ENCODE measurements at regions of chr4 and their contacts with region 1.

Region 1: DNA sequence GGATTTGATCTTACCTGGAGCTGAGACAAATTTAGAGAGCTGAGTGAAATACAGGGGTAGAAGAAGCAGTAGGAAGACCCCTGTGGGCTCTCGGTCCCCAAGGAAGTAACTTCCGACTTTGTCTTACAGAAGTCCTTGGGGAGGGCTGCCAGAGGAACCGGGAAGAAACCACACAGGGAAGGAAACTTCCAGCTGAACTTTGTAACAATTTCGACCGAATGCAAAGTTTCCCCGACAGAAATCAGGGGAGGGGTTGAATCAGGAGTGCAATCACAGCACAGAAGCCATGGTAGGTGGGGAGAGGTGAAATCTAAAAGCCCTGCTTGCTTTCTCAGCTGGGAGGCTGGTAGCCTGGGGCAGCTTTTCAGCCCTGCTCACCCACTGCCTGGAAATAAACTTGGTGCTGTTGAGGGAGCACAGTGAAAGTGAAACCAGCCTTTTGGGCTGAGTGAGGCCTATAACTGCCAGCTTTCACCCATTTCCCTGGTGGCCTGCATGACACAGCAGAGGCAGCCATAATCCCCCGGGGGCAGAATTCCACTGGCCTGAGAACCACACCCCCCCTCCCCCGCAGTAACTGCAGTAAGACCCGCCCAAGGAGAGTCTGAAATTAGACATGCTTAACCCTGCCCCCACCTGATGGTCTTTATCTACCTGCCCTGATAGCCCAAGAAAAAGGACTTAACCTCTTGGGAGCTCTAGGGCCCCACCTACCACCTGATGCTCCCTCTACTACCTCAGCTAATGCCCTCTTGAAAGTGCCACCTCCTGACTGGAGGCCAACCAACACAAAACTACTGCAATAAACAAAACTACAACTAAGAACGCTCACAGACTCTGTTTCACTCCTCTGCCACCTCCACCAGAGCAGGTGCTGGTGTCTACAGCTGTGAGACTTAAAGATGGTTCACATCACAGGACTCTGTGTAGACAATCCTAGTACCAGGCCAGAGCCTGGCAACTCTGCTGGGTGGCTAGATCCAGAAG is 248.2 kb downstream of the PARM1 start:
- DNase-seq: no peak
- H3K4me3 ChIP-seq: no peak overlapping the region
- H3K27ac ChIP-seq: no peak overlapping the region
- H3K4me1 ChIP-seq: no peaks in the 10 kb centered on the region
- H3K27me3 ChIP-seq: no peaks in the 10 kb centered on the region
- CTCF ChIP-seq: no peak

Region 2: DNA sequence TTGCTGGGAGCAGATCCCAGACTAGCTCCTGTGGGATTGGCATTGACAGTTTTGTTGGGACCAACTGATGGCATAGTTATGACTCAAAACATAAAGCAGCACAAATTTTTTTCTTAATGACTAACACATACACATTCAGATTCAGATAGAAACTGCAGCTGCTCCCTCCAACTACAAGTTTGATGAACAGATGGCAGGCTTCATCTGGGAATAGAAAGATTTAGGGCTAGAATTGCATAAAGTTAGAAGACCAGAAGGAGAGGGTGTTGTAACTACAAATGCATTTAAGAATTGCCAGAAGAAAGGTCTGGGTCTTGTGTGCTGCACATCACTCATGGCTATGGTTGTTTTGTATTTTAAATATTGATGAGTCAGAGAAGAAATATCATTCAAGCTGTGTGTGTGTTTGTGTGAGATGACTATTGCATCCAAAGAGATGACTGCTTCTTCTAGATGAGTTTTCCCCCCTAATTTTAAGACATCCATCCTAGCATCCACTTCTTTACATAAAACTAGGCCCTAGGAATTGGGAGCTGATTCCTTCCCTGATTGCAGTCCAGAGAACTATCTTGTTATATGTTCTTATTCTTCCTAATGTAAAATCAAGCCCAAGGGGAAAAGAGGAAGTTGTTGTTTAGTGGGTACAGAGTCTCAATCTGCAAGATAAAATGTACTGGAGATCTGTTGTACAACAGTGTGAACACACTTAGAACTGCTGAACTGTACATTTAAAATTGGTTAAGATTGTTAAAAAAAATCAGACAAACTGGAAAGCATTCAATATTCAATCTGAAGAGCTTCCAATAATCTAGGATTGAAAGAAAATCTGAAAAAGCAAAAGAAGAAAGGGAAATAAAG is 73.1 kb before region 1 on chr4:
- CTCF ChIA-PET with region 1: no interaction called
- dilution Hi-C with region 1: no loop called
- in situ Hi-C with region 1: no loop called
- intact Hi-C with region 1: no loop called
- DNase-seq: no peak
- H3K4me3 ChIP-seq: no peak overlapping the region
- H3K27ac ChIP-seq: no peak overlapping the region
- H3K4me1 ChIP-seq: no peaks in the 10 kb centered on the region
- H3K27me3 ChIP-seq: peaks cover 8% of the 10 kb centered on the region
- CTCF ChIP-seq: no peak

Region 3: GRCh38 chr4:75207882-75208281 is 26.8 kb after region 1 on chr4:
- CTCF ChIA-PET with region 1: no interaction called
- dilution Hi-C with region 1: no loop called
- in situ Hi-C with region 1: no loop called
- intact Hi-C with region 1: loop called (anchors 2 kb)
- DNase-seq: no peak
- H3K4me3 ChIP-seq: no peak overlapping the region
- H3K27ac ChIP-seq: no peak overlapping the region
- H3K4me1 ChIP-seq: no peaks in the 10 kb centered on the region
- H3K27me3 ChIP-seq: peaks cover 2% of the 10 kb centered on the region
- CTCF ChIP-seq: no peak